Mammary epithelial cell (primary cell): ENCODE measurements at regions of chr1 and their contacts with region 1.

Region 1: GRCh38 chr1:156062189-156062588 is 1.2 kb downstream of the RAB25 start:
- DNase-seq: no peak
- H3K4me3 ChIP-seq: peak overlapping the region in 2 of 3 experiments; percentile 3 to 22
- H3K27ac ChIP-seq: no peak overlapping the region
- H3K4me1 ChIP-seq: peaks cover 13% of the 10 kb centered on the region
- H3K27me3 ChIP-seq: no peaks in the 10 kb centered on the region
- CTCF ChIP-seq: no peak

Region 2: DNA sequence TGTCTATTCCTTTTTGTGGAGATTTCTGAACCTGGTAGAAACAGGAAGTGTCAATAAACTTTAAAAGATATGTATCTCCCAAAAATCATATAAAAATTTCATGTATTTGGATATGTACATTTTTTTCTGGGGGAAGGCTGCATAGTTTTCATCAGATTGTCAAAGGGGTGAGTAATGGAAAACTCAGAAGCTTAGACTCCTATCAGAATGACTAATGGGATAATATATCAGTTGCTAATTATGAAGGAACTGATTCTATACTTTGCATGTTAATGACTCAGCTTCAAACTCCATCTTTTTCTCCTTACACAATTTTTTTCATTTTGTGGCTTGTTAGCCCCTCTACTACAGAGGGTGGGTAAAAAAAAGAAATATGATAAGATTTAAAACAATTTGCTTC is 261.0 kb before region 1 on chr1:
- CTCF ChIA-PET with region 1: interaction called, 20 read pairs
- dilution Hi-C with region 1: no loop called
- in situ Hi-C with region 1: no loop called
- intact Hi-C with region 1: no loop called
- DNase-seq: peak; percentile 32
- H3K4me3 ChIP-seq: no peak overlapping the region
- H3K27ac ChIP-seq: no peak overlapping the region
- H3K4me1 ChIP-seq: no peaks in the 10 kb centered on the region
- H3K27me3 ChIP-seq: no peaks in the 10 kb centered on the region
- CTCF ChIP-seq: no peak